ENCODE measurements at regions of chr20 and their contacts with region 1.

Region 1: GRCh38 chr20:6908673-6909072 is 141.2 kb downstream of the BMP2 start:
- DNase-seq: peak; percentile 55
- H3K4me3 ChIP-seq: no peak overlapping the region
- H3K27ac ChIP-seq: peak overlapping the region; percentile 64
- H3K4me1 ChIP-seq: peaks cover 26% of the 10 kb centered on the region
- H3K27me3 ChIP-seq: no peaks in the 10 kb centered on the region
- CTCF ChIP-seq: no peak

Region 2: GRCh38 chr20:6925744-6926278 is 17.1 kb after region 1 on chr20:
- CTCF ChIA-PET with region 1: no interaction called
- dilution Hi-C with region 1: no loop called
- in situ Hi-C with region 1: no loop called
- intact Hi-C with region 1: loop called (anchors 1 kb)
- DNase-seq: peak; percentile 88
- H3K4me3 ChIP-seq: peak overlapping the region in 2 of 3 experiments; percentile 13 to 27
- H3K27ac ChIP-seq: peak overlapping the region; percentile 75
- H3K4me1 ChIP-seq: peaks cover 19% of the 10 kb centered on the region
- H3K27me3 ChIP-seq: no peaks in the 10 kb centered on the region
- CTCF ChIP-seq: no peak

Region 3: DNA sequence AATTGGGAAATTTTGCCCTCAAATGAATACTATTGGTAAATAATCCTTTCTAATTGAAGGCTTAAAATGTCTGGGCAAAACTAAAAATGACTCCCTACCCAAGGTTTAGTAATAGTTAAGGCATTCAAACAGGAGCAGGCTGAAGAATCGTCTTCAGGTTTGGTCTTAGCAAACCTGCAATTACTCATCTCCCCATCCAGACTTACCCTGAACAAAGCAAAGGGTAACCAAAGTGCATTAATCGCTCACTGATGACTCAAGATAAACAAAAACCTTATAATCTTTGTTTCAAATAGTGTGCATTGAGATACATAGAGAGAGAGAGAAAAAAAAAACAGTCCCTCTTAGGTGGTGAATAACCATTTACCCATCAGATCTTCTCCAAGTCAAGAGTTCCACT is 84.3 kb after region 1 on chr20:
- CTCF ChIA-PET with region 1: no interaction called
- dilution Hi-C with region 1: no loop called
- in situ Hi-C with region 1: no loop called
- intact Hi-C with region 1: loop called (anchors 1 kb)
- DNase-seq: peak; percentile 98
- H3K4me3 ChIP-seq: no peak overlapping the region
- H3K27ac ChIP-seq: peak overlapping the region; percentile 93
- H3K4me1 ChIP-seq: peaks cover 34% of the 10 kb centered on the region
- H3K27me3 ChIP-seq: no peaks in the 10 kb centered on the region
- CTCF ChIP-seq: no peak

Measured in mammary epithelial cell (primary cell).